ENCODE measurements at regions of chr17 and their contacts with region 1.

Region 1: DNA sequence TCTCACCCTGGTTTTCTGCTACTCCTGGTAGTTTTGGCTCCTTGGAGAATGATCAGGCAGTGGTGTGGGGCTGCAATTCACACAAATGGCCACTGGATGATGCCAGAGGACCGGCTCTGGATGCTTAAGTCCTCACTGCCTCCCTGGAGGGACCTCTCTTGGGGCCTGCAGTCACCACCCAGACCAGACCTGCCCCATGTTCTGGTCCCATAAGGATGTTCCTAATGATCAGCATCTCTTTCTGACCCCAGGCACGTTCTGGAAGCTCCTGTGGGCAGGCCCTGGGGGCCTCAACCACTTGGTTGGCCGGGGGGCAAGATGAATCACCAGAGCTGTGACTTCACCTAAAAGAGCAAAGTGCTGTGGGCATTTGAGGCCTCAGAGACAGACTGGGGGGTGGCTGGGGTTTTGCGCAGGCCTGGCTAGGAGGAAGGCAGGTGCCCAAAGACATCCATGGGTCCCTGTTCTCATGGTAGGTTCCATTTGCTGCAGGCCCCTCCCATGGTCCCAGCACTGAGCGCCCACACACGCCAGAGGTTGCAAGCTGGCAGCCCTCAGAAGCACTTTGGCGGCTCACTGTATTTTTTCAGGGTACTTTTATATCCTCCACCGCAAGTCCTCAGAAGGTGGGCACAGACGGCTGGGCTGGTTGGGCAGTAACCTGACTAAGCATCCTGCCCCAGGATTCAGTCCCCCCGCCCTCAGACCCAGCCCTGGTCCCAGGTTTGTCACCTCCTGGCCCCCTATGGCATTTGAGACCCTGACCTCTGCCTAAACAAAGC is 53.2 kb downstream of the NT5M start:
- DNase-seq: peak; percentile 68 to 83
- H3K4me3 ChIP-seq: no peak overlapping the region
- H3K27ac ChIP-seq: no peak overlapping the region
- H3K4me1 ChIP-seq: peaks cover 0 to 10% (median 1%) of the 10 kb centered on the region in 4 experiments; a peak in 5 of 7 replicates
- H3K27me3 ChIP-seq: no peaks in the 10 kb centered on the region
- CTCF ChIP-seq: peak; percentile 97 to 100 (median 99)
- EP300 ChIP-seq: no peak
- POLR2A ChIP-seq: no peak
- RAD21 ChIP-seq: peak; percentile 100

Region 2: GRCh38 chr17:17108451-17109049 is 247.8 kb before region 1 on chr17:
- CTCF ChIA-PET with region 1: no interaction called
- POLR2A ChIA-PET with region 1: no interaction called
- DNase-seq: no peak
- H3K4me3 ChIP-seq: no peak overlapping the region
- H3K27ac ChIP-seq: no peak overlapping the region
- H3K4me1 ChIP-seq: peaks cover 0 to 8% (median 4%) of the 10 kb centered on the region in 4 experiments; a peak in 4 of 7 replicates
- H3K27me3 ChIP-seq: no peaks in the 10 kb centered on the region
- CTCF ChIP-seq: peak in 1 of 3 experiments; percentile 27; a peak in 2 of 4 replicates
- EP300 ChIP-seq: no peak
- POLR2A ChIP-seq: no peak
- RAD21 ChIP-seq: peak; percentile 21; a peak in 3 of 4 replicates

Region 3: DNA sequence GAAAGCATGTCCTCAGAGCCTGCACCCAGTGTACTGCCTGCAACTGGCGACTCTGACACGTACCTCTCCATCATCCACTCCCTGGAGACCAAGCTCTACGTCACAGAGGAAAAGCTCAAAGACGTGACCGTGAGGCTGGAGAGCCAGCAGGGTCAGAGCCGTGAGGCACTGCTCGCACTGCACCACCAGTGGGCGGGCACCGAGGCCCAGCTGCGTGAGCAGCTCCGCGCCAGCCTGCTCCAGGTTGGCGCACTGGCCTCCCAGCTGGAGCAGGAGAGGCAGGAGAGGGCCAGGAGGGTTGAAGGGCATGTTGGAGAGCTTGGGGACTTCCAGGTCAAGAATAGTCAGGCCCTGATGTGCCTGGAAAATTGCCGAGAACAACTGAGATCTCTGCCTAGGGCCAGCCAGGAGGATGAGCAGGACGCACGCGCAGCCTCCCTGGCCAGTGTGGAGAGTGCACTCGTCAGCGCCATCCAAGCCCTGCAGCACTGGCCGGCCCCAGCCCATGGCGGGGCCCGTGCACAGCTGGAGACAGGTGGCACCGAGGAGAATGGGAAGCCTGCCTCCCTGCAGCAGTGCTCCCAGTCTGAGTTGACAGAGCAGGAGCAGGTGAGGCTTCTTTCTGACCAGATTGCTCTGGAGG is 190.6 kb before region 1 on chr17:
- CTCF ChIA-PET with region 1: no interaction called
- POLR2A ChIA-PET with region 1: no interaction called
- DNase-seq: no peak
- H3K4me3 ChIP-seq: no peak overlapping the region
- H3K27ac ChIP-seq: no peak overlapping the region
- H3K4me1 ChIP-seq: no peaks in the 10 kb centered on the region
- H3K27me3 ChIP-seq: no peaks in the 10 kb centered on the region; a peak in 1 of 7 replicates
- CTCF ChIP-seq: no peak
- EP300 ChIP-seq: no peak
- POLR2A ChIP-seq: no peak
- RAD21 ChIP-seq: no peak

Region 4: GRCh38 chr17:17269926-17270773 is 86.2 kb before region 1 on chr17:
- CTCF ChIA-PET with region 1: no interaction called
- POLR2A ChIA-PET with region 1: no interaction called
- DNase-seq: peak in 1 of 2 experiments; percentile 57
- H3K4me3 ChIP-seq: no peak overlapping the region
- H3K27ac ChIP-seq: no peak overlapping the region
- H3K4me1 ChIP-seq: no peaks in the 10 kb centered on the region
- H3K27me3 ChIP-seq: no peaks in the 10 kb centered on the region
- CTCF ChIP-seq: peak; percentile 50 to 70 (median 59)
- EP300 ChIP-seq: no peak
- POLR2A ChIP-seq: no peak
- RAD21 ChIP-seq: peak; percentile 47 to 48

Region 5: GRCh38 chr17:17325228-17325627 is 31.1 kb before region 1 on chr17:
- CTCF ChIA-PET with region 1: no interaction called
- POLR2A ChIA-PET with region 1: no interaction called
- DNase-seq: no peak
- H3K4me3 ChIP-seq: no peak overlapping the region
- H3K27ac ChIP-seq: no peak overlapping the region
- H3K4me1 ChIP-seq: no peaks in the 10 kb centered on the region
- H3K27me3 ChIP-seq: no peaks in the 10 kb centered on the region
- CTCF ChIP-seq: no peak
- EP300 ChIP-seq: no peak
- POLR2A ChIP-seq: no peak
- RAD21 ChIP-seq: no peak

Region 6: DNA sequence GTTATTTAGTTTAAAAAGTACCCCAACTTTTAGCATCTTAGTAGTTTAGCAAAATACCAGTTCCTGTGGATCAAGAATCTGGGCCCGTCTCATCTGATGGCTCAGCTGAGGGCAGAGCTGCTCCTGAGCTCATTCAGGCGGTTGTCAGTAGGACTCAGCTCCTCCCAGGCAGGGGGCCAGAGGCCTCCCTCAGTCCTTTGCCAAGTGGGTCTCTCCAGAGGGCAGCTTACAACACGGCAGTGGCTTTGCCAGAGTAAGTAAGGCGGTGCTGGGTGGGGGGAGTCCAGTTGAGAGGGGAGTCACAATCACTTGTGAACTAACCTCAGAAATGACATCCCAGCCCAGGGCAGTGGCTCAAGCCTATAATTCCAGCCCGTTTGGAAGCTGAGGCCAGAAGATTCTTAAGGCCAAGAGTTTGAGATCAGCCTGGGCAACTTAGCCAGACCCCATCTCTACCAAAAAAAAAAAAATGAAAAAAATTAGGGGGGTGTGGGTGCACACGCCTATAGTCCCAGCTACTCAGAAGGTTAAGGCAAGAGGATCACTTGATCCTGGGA is 39.0 kb after region 1 on chr17:
- CTCF ChIA-PET with region 1: interaction called, 15 read pairs
- POLR2A ChIA-PET with region 1: no interaction called
- DNase-seq: no peak
- H3K4me3 ChIP-seq: no peak overlapping the region
- H3K27ac ChIP-seq: no peak overlapping the region
- H3K4me1 ChIP-seq: no peaks in the 10 kb centered on the region
- H3K27me3 ChIP-seq: no peaks in the 10 kb centered on the region; a peak in 1 of 7 replicates
- CTCF ChIP-seq: no peak
- EP300 ChIP-seq: no peak
- POLR2A ChIP-seq: no peak
- RAD21 ChIP-seq: no peak

Region 7: GRCh38 chr17:17440010-17440843 is 83.9 kb after region 1 on chr17:
- CTCF ChIA-PET with region 1: interaction called, 22 read pairs
- POLR2A ChIA-PET with region 1: no interaction called
- DNase-seq: peak; percentile 74 to 89
- H3K4me3 ChIP-seq: no peak overlapping the region
- H3K27ac ChIP-seq: no peak overlapping the region
- H3K4me1 ChIP-seq: peaks cover 0 to 7% (median 3%) of the 10 kb centered on the region in 4 experiments; a peak in 3 of 7 replicates
- H3K27me3 ChIP-seq: no peaks in the 10 kb centered on the region
- CTCF ChIP-seq: peak; percentile 66 to 87 (median 75)
- EP300 ChIP-seq: no peak
- POLR2A ChIP-seq: no peak
- RAD21 ChIP-seq: peak; percentile 50 to 70

Region 8: DNA sequence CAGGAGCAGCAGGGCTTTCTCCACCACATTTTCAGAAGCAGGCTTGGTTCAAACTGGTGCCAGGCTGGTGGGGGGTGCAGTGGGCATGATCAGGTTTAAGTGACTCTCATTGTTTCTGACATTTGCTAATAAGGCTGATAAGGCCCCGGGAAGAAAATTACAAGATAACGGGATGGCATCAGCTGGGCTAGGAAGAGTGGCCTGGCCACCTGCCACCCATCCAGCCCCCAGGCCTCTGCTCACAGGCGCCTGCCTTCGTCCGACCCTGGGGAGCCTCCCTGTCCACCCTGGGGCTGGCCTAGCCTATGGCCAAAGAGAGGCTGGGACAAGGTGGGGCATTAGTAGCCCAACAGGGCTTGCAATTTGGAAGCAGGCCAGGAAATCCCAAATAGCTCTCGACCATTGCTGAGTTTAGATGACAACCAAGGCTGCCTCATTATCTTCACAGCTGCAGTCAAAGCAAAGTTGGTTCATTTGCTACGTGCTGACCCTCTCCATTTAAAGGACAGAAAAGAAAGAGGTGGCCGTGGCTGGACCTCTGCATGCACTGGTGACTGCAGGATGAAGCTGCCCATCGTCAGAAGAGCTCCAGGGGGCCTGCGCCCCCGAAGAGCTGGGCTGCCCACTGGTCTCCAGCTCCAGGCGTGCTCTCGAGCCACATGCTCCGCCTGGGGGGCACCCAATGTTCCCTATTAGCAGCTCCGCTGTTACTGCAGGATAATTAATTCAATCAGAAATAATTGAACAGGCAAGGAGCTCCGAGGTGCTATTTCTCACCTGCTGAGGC is 190.3 kb after region 1 on chr17:
- CTCF ChIA-PET with region 1: interaction called, 11 read pairs
- POLR2A ChIA-PET with region 1: no interaction called
- DNase-seq: no peak
- H3K4me3 ChIP-seq: no peak overlapping the region
- H3K27ac ChIP-seq: no peak overlapping the region
- H3K4me1 ChIP-seq: no peaks in the 10 kb centered on the region; a peak in 1 of 7 replicates
- H3K27me3 ChIP-seq: no peaks in the 10 kb centered on the region
- CTCF ChIP-seq: no peak
- EP300 ChIP-seq: no peak
- POLR2A ChIP-seq: no peak
- RAD21 ChIP-seq: no peak

Region 9: GRCh38 chr17:17636272-17636885 is 280.0 kb after region 1 on chr17:
- CTCF ChIA-PET with region 1: interaction called, 56 read pairs
- POLR2A ChIA-PET with region 1: no interaction called
- DNase-seq: no peak
- H3K4me3 ChIP-seq: no peak overlapping the region
- H3K27ac ChIP-seq: no peak overlapping the region
- H3K4me1 ChIP-seq: no peaks in the 10 kb centered on the region
- H3K27me3 ChIP-seq: no peaks in the 10 kb centered on the region; a peak in 1 of 7 replicates
- CTCF ChIP-seq: no peak
- EP300 ChIP-seq: no peak
- POLR2A ChIP-seq: no peak
- RAD21 ChIP-seq: no peak